ENCODE measurements at regions of chr22 and their contacts with region 1.

Region 1: DNA sequence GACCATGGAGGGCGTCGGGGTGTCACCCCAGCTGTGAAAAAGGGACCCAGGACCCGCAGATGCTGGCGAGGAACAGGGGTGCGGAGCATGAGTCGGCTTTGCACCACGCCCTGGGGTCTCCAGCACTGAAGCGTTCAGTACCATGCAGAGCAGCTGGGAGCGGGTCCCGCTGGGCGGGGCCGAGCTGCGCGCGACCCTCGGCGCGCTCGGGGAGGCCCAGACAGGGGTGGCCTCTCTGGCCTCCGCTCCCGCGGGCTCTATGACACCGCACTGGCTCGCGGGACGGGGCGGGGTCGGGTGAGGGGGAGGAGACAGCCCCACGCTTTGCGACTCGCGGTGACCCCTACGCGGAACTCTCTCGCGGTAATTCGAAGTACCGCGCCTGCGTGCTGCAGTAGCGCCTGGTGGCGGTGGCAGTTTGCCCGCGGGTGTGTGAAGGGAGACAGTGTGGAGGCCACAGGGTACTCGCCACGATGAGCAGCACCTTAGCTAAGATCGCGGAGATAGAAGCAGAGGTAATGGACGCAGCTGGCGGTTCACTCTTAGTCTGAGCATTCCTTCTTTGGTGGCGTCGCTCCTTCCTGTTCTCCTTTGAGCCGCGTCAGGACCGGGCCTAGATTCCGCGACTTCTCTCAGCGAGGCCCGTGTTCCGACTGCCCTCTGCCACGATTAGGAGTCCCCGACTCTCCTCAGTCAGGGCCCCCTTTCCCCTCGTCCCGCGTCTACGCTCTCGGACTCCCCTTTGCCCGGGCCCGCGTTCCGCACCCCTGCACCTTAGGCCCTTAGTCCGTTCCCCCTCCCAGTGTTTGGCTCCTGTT is at the start of gene DRG1:
- DNase-seq: peak; percentile 44
- H3K4me3 ChIP-seq: peak within 1 kb of the TSS; percentile 99
- CTCF ChIP-seq: no peak

Region 2: DNA sequence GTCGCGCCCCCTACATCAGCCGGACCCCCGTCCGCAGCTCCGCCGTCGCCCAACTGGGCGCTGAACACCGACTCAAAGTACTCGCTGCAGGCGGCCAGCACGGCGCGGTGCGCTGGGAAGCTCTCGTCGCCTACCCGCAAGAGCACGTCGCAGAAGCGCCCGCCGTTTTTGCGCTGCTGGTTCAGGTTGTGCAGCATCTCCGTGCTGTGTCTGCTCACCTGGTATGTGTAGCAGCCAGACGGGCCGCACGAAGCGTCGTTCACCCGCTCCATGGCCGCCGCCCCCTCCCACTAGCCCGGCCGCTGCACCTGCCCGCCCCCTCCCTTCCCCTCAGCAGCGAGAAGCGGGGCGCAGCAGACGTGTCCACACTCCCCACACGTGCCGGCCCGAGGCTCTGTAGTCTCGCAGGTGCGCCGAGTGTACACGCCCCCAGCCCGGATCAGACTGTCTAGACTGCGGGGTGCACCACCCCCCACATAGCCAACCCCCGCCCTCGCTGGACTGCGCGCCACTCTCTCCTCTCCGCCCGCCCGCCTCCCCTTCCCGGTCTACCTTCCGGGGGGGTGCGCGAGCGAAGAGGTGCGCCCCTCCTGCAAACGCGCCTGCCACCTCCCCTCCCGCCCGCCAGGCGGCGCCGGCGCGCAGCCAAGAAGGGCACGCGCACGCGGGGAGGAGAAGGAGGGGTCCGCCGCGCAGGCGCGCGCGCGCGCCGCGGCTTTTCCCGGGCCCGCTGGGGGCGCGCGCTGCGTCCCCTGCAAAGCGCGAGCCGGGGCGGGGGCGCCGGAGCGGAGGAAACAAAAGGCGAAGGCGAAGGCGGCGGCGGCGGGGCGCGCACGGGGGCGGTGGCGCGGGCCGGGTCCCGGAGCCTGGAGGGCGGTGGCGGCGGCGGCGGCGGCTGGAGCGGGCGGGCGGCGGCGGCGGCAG is 53.8 kb before region 1 on chr22:
- CTCF ChIA-PET with region 1: interaction called, 14 read pairs
- POLR2A ChIA-PET with region 1: interaction called, 5 read pairs
- DNase-seq: no peak
- H3K4me3 ChIP-seq: peak overlapping the region; percentile 70
- CTCF ChIP-seq: peak; percentile 90

Region 3: GRCh38 chr22:31652911-31653684 is 253.7 kb after region 1 on chr22:
- CTCF ChIA-PET with region 1: no interaction called
- POLR2A ChIA-PET with region 1: no interaction called
- DNase-seq: no peak
- H3K4me3 ChIP-seq: no peak overlapping the region
- CTCF ChIP-seq: no peak

Region 4: GRCh38 chr22:31680861-31681341 is 281.5 kb after region 1 on chr22:
- CTCF ChIA-PET with region 1: no interaction called
- POLR2A ChIA-PET with region 1: no interaction called
- DNase-seq: no peak
- H3K4me3 ChIP-seq: no peak overlapping the region
- CTCF ChIP-seq: no peak

Measured in AG04449 (cell line).